Heart left ventricle (tissue), 16 donors: ENCODE measurements at regions of chr1 and their contacts with region 1.

Region 1: DNA sequence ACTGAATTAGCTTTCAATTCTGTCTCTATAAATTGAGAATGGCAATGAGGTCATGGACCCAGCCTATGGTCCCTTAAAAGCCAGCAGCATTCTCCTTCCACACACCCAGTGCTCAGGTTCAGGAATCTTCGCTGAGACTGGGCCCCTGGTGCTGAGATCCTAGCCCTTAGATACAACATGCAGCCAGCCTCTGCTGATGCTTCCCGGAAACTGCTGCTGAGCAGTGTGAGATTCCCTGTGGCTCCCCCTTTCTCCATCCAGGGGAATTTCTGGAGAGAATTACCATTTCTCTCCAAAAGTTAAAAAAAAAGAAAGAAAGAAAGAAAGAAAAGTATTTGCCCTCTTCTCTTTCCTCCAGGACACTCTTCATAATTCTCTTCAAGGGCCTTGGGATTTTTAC is 31.7 kb upstream of the RALGPS2 start:
- DNase-seq: no peak
- ATAC-seq: no peak
- H3K4me3 ChIP-seq: no peak overlapping the region
- H3K27ac ChIP-seq: no peak overlapping the region
- H3K4me1 ChIP-seq: peaks cover 0 to under 1% (median 0%) of the 10 kb centered on the region in 12 donors
- H3K27me3 ChIP-seq: no peaks in the 10 kb centered on the region
- CTCF ChIP-seq: peak in 3 of 12 donors; percentile 11 to 26 (median 13)
- POLR2A ChIP-seq: no peak

Region 2: DNA sequence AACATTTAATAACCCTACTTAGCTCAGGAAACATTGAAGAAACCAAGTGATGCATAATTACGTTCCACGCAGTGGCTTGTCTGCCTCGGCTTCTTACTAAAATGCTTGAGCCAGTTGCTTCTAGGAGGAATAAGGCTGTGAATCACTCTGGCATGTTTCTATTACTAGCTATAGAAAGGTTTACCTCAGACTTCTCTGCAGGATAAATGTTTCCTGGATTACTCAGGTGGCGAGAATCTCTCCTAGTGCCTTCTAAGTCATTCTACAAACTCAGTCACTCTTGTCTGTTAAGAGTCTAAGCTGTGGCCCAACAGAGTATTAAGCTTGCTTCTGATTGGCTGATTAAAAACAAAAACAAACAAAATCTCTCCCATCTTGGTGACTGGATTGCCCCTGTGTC is 60.3 kb before region 1 on chr1:
- intact Hi-C with region 1: loop called in 1 of 10 experiments (anchors 2 kb)
- DNase-seq: no peak
- ATAC-seq: no peak
- H3K4me3 ChIP-seq: no peak overlapping the region
- H3K27ac ChIP-seq: peak overlapping the region in 1 of 12 donors; percentile 43
- H3K4me1 ChIP-seq: peaks cover 0 to 17% (median 0%) of the 10 kb centered on the region in 12 donors
- H3K27me3 ChIP-seq: no peaks in the 10 kb centered on the region
- CTCF ChIP-seq: no peak
- POLR2A ChIP-seq: no peak

Region 3: DNA sequence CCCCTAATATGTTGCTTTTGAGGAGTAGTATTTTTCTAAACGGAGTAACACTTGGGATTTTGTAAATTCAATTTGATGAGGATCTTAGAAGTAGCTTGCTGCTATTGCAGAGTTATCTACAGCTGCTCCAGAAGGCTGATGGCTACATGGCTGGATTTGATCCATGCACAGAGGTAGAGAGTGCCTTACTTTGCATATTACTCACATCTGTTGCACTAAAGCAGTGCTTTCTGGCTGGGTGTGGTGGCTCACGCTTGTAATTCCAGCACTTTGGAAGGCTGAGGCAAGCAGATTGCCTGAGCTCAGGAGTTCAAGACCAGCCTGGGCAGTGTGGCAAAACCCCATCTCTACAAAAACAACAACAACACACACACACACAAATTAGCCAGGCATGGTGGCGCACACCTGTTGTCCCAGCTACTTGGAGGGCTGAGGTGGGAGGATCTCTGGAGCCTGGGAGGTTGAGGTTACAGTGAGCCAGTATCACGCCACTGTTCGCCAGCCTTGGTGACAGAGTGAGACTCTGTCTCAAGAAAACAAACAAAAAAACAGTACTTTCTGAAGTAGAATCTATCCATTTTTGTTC is 56.3 kb after region 1 on chr1:
- intact Hi-C with region 1: no loop called
- DNase-seq: no peak
- ATAC-seq: no peak
- H3K4me3 ChIP-seq: no peak overlapping the region
- H3K27ac ChIP-seq: no peak overlapping the region
- H3K4me1 ChIP-seq: peaks cover 0 to 5% (median 0%) of the 10 kb centered on the region in 12 donors
- H3K27me3 ChIP-seq: no peaks in the 10 kb centered on the region
- CTCF ChIP-seq: no peak
- POLR2A ChIP-seq: no peak